Activated CD4-positive, alpha-beta memory T cell treated with anti-CD3 and anti-CD28 coated beads for 36 hours (primary cell): ENCODE measurements at regions of chr5 and their contacts with region 1.

Region 1: DNA sequence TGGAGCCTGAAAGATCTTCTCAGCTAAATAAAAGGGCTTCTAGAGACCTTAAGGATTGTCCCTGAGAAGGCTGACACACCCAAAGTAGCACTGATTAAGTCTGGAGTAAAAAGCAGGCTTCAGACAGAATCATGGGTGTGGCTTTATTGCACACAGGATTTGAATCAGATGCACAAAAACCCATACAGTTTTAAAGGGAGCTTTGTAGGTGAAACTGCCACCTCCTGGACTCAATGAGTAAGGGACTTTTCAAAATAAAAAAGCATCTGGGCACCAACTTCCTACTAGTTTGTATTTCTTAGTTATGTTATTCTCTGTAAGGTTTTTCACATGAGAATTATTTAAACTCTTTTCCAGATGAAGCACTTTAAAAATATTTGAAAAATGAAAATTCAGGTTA is 129.4 kb downstream of the EDIL3 start:
- DNase-seq: no peak
- H3K4me3 Mint-ChIP-seq: no peak overlapping the region
- H3K27ac Mint-ChIP-seq: no peak overlapping the region
- H3K4me1 Mint-ChIP-seq: no peaks in the 10 kb centered on the region
- H3K27me3 Mint-ChIP-seq: no peaks in the 10 kb centered on the region

Region 2: GRCh38 chr5:83718195-83718825 is 537.0 kb before region 1 on chr5:
- CTCF ChIA-PET with region 1: no interaction called
- POLR2A ChIA-PET with region 1: no interaction called
- intact Hi-C with region 1: loop called (anchors 5 kb)
- DNase-seq: peak; percentile 18
- H3K4me3 Mint-ChIP-seq: no peak overlapping the region
- H3K27ac Mint-ChIP-seq: no peak overlapping the region
- H3K4me1 Mint-ChIP-seq: peaks cover 6% of the 10 kb centered on the region
- H3K27me3 Mint-ChIP-seq: peaks cover 45% of the 10 kb centered on the region

Region 3: DNA sequence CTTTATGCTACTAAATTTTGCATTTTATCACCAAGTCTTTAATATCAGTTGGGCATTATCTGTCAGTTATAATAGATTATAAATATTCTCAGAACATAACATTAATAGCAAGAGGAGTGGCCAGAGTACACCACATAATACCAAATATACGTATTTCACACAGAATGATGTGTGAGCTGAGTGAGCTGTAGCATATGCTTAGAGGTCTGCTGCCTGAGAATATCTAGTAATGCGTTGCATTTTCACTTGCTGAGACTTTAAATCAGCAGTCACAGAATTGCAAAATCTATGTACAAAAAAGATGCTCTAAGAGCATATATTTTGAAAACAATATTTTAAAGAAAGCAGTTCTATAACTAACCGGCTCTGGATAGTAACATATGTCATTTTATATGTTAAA is 1050.5 kb after region 1 on chr5:
- CTCF ChIA-PET with region 1: no interaction called
- POLR2A ChIA-PET with region 1: no interaction called
- intact Hi-C with region 1: no loop called
- DNase-seq: no peak
- H3K4me3 Mint-ChIP-seq: no peak overlapping the region
- H3K27ac Mint-ChIP-seq: no peak overlapping the region
- H3K4me1 Mint-ChIP-seq: no peaks in the 10 kb centered on the region
- H3K27me3 Mint-ChIP-seq: no peaks in the 10 kb centered on the region